Heart right ventricle (tissue), 16 donors: ENCODE measurements at regions of chr9 and their contacts with region 1.

Region 1: GRCh38 chr9:25726871-25727410 is 48.7 kb upstream of the TUSC1 start:
- DNase-seq: no peak
- ATAC-seq: no peak
- H3K4me3 ChIP-seq: no peak overlapping the region
- H3K27ac ChIP-seq: no peak overlapping the region
- H3K4me1 ChIP-seq: no peaks in the 10 kb centered on the region
- H3K27me3 ChIP-seq: no peaks in the 10 kb centered on the region
- CTCF ChIP-seq: no peak

Region 2: GRCh38 chr9:25017779-25018178 is 709.2 kb before region 1 on chr9:
- intact Hi-C with region 1: loop called in 1 of 10 experiments (anchors 5 kb)
- DNase-seq: no peak
- ATAC-seq: no peak
- H3K4me3 ChIP-seq: no peak overlapping the region
- H3K27ac ChIP-seq: no peak overlapping the region
- H3K4me1 ChIP-seq: no peaks in the 10 kb centered on the region
- H3K27me3 ChIP-seq: no peaks in the 10 kb centered on the region
- CTCF ChIP-seq: no peak